ENCODE measurements at regions of chr6 and their contacts with region 1.

Region 1: GRCh38 chr6:25788305-25788922 is 33.9 kb downstream of the SLC17A4 start:
- DNase-seq: peak; percentile 60
- ATAC-seq: peak; percentile 55
- H3K4me3 Mint-ChIP-seq: no peak overlapping the region
- H3K27ac Mint-ChIP-seq: no peak overlapping the region
- H3K4me1 Mint-ChIP-seq: peaks cover 3% of the 10 kb centered on the region
- H3K27me3 Mint-ChIP-seq: peaks cover 8% of the 10 kb centered on the region

Region 2: GRCh38 chr6:25499615-25500235 is 288.7 kb before region 1 on chr6:
- CTCF ChIA-PET with region 1: no interaction called
- POLR2A ChIA-PET with region 1: no interaction called
- intact Hi-C with region 1: no loop called
- DNase-seq: no peak
- ATAC-seq: no peak
- H3K4me3 Mint-ChIP-seq: no peak overlapping the region
- H3K27ac Mint-ChIP-seq: no peak overlapping the region
- H3K4me1 Mint-ChIP-seq: no peaks in the 10 kb centered on the region
- H3K27me3 Mint-ChIP-seq: no peaks in the 10 kb centered on the region

Region 3: DNA sequence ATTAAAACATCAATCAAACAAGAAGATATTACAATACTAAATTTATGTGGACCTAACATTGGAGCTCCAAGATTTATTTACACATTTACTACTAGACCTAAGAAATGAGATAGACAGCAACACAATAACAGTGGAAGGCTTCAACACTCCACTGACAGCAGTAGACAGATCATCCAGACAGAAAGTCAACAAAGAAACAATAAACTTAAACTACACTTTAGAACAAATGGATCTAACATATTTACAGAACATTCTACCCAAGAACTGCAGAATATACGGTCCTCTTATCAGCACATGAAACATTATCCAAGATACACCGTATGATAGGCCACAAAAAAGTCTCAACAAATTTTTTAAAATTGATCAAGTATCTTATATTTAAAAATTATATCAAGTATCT is 16.4 kb after region 1 on chr6:
- CTCF ChIA-PET with region 1: interaction called, 10 read pairs
- POLR2A ChIA-PET with region 1: interaction called, 3 read pairs
- intact Hi-C with region 1: no loop called
- DNase-seq: no peak
- ATAC-seq: no peak
- H3K4me3 Mint-ChIP-seq: no peak overlapping the region
- H3K27ac Mint-ChIP-seq: no peak overlapping the region
- H3K4me1 Mint-ChIP-seq: no peaks in the 10 kb centered on the region
- H3K27me3 Mint-ChIP-seq: peaks cover 13% of the 10 kb centered on the region

Region 4: GRCh38 chr6:25882051-25882496 is 93.7 kb after region 1 on chr6:
- CTCF ChIA-PET with region 1: interaction called, 6 read pairs
- POLR2A ChIA-PET with region 1: no interaction called
- intact Hi-C with region 1: loop called in 1 of 2 experiments (anchors 2 kb)
- DNase-seq: peak; percentile 68
- ATAC-seq: peak; percentile 92
- H3K4me3 Mint-ChIP-seq: peak overlapping the region; percentile 76
- H3K27ac Mint-ChIP-seq: peak overlapping the region; percentile 38
- H3K4me1 Mint-ChIP-seq: peaks cover 3% of the 10 kb centered on the region
- H3K27me3 Mint-ChIP-seq: peaks cover 4% of the 10 kb centered on the region

Region 5: GRCh38 chr6:25889877-25890853 is 101.8 kb after region 1 on chr6:
- CTCF ChIA-PET with region 1: interaction called, 5 read pairs
- POLR2A ChIA-PET with region 1: no interaction called
- intact Hi-C with region 1: loop called in 1 of 2 experiments (anchors 1 kb)
- DNase-seq: peak; percentile 29
- ATAC-seq: peak; percentile 16
- H3K4me3 Mint-ChIP-seq: no peak overlapping the region
- H3K27ac Mint-ChIP-seq: no peak overlapping the region
- H3K4me1 Mint-ChIP-seq: no peaks in the 10 kb centered on the region
- H3K27me3 Mint-ChIP-seq: peaks cover 4% of the 10 kb centered on the region

Region 6: DNA sequence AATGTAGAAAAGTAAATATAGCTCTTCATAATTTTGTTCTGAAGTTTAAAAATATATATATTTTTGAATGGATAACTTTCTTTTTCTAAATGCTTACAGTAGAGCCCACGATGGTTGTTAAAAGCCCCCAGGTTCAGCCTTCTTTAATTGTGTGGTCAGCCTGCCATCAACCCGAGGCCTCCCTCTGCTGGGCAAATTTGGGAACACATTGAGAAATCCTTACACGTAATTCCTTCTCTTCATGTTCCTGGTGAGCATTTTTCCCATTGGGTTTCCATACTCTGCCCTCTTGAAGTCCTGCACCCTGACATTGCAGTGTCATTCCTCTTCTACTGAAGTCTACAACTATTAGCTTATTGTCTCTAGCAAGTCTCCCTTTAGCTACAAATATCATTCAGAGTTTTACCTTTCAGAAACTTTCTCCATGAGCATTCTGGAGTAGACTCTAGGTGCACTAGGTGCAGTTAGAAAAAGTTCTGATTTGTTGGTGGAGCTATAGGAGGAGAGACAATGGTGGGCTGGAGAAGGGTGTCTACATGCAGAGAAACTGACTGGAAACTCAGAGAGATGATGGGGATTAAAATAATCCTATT is 214.8 kb after region 1 on chr6:
- CTCF ChIA-PET with region 1: interaction called, 13 read pairs
- POLR2A ChIA-PET with region 1: no interaction called
- intact Hi-C with region 1: loop called in 1 of 2 experiments (anchors 1 kb)
- DNase-seq: peak; percentile 65
- ATAC-seq: peak; percentile 47
- H3K4me3 Mint-ChIP-seq: no peak overlapping the region
- H3K27ac Mint-ChIP-seq: no peak overlapping the region
- H3K4me1 Mint-ChIP-seq: peaks cover 3% of the 10 kb centered on the region
- H3K27me3 Mint-ChIP-seq: no peaks in the 10 kb centered on the region

Region 7: GRCh38 chr6:26129656-26130055 is 341.2 kb after region 1 on chr6:
- CTCF ChIA-PET with region 1: no interaction called
- POLR2A ChIA-PET with region 1: no interaction called
- intact Hi-C with region 1: no loop called
- DNase-seq: no peak
- ATAC-seq: no peak
- H3K4me3 Mint-ChIP-seq: no peak overlapping the region
- H3K27ac Mint-ChIP-seq: no peak overlapping the region
- H3K4me1 Mint-ChIP-seq: peaks cover 46% of the 10 kb centered on the region
- H3K27me3 Mint-ChIP-seq: no peaks in the 10 kb centered on the region

Measured in activated CD4-positive, alpha-beta T cell treated with anti-CD3 and anti-CD28 coated beads for 36 hours (primary cell).